ENCODE measurements at regions of chr4 and their contacts with region 1.

Region 1: GRCh38 chr4:113394730-113395530 is 345.5 kb downstream of the ANK2 start:
- DNase-seq: peak; percentile 47
- H3K4me3 ChIP-seq: no peak overlapping the region; a peak in 1 of 4 replicates
- H3K27ac ChIP-seq: no peak overlapping the region
- H3K4me1 ChIP-seq: no peaks in the 10 kb centered on the region
- H3K27me3 ChIP-seq: no peaks in the 10 kb centered on the region
- CTCF ChIP-seq: peak; percentile 82
- EP300 ChIP-seq: peak in 1 of 2 experiments; percentile 75; a peak in 2 of 4 replicates
- RAD21 ChIP-seq: peak; percentile 99

Region 2: GRCh38 chr4:113411496-113411938 is 16.6 kb after region 1 on chr4:
- CTCF ChIA-PET with region 1: interaction called, 35 read pairs
- POLR2A ChIA-PET with region 1: no interaction called
- DNase-seq: no peak
- H3K4me3 ChIP-seq: no peak overlapping the region
- H3K27ac ChIP-seq: no peak overlapping the region
- H3K4me1 ChIP-seq: no peaks in the 10 kb centered on the region
- H3K27me3 ChIP-seq: no peaks in the 10 kb centered on the region
- CTCF ChIP-seq: no peak
- EP300 ChIP-seq: no peak
- RAD21 ChIP-seq: no peak

Measured in SK-N-SH (cell line).